Upper lobe of right lung (tissue), 1 donor: ENCODE measurements at regions of chr1 and their contacts with region 1.

Region 1: DNA sequence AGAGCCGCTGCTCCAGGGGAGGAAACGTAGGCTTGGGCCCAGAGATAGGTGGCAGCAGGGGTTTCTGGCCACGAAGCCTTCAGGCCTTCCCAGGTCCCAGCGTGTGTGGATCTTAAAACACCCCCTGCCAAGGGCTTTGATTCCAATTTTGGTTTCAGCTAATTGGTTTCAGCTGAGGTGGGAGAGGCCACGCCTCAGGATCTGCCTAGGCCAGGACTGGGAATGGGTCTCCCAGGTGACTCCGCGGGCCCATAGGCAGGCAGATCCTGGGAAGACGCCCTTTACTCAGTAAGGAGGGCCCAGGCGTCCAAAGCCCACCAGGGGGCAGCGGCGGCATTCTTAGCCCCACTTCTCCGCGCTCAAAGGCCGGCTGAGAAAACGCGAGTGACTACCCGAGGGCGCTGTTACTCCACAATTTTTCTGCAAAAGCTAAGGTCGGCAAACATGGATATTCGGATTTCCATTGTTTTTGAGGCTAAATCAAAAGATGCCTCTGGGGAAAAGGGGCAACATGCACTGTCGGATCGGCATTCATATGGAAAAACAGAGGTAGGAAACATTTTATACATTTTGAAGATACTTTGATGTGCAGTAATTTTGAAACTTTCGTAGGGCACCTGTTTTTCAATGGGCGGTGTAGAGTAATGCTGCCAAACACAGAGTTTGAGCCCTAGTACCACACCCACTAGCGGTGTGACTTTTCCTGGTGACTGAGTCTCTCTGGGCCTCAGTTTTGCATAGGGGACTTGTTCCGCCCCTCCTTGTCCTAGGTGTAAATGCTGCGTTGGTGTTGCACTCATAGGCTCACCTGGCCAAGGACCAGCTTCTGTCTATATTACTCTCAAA is 31.8 kb upstream of the BCL10 start:
- DNase-seq: peak; percentile 92
- ATAC-seq: peak; percentile 98
- H3K4me3 ChIP-seq: no peak overlapping the region
- H3K27ac ChIP-seq: no peak overlapping the region
- H3K4me1 ChIP-seq: peaks cover 6% of the 10 kb centered on the region
- H3K27me3 ChIP-seq: no peaks in the 10 kb centered on the region
- CTCF ChIP-seq: peak; percentile 96

Region 2: DNA sequence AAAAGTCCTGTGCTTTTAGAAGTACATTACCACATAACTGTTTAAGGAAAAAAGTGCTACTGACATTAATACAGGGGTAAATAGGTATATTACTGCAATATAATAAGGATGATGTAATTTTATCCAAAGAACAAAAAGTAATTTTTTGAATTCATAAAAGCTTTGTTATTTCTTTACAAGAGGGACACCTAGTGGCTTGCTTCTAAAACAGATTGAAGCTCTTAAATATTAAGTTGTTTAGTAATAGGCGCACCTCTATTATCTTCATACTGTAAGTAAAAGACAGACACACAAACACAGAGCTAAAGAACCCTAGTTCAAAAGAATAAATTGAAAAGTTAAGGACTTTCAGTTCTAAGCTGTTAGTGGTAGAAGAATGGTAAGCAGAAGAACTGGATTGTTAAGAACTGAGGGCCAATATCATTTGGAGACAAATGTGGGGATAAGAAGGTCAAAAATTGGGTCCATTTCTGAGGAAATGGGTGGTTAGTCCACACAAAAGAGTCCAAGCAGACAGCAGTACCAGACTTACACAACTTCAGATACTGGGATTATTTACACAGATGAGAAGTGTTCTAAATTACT is 384.6 kb after region 1 on chr1:
- intact Hi-C with region 1: loop called (anchors 5 kb)
- DNase-seq: no peak
- ATAC-seq: peak; percentile 32
- H3K4me3 ChIP-seq: no peak overlapping the region
- H3K27ac ChIP-seq: no peak overlapping the region
- H3K4me1 ChIP-seq: no peaks in the 10 kb centered on the region
- H3K27me3 ChIP-seq: no peaks in the 10 kb centered on the region
- CTCF ChIP-seq: peak; percentile 57